Sciatic nerve (tissue), 2 donors: ENCODE measurements at regions of chr19 and their contacts with region 1.

Region 1: DNA sequence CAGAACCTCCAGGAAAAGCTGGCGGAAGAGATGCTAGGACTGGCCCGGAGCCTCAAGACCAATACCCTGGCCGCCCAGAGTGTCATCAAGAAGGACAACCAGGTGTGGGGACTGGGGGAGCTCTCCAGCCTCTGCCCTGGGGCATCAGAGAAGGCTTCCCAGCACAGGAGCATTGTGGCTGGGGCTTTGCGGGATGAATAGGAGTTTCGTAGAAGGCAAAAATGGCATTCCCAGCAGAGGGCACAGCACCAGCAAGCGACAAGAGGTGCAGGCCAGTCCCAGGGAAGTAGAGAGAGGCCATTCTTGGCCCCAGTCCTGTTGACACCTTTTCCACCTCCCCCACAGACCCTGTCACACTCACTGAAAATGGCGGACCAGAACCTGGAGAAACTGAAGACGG is 4.1 kb downstream of the USE1 start:
- DNase-seq: no peak
- ATAC-seq: no peak

Region 2: DNA sequence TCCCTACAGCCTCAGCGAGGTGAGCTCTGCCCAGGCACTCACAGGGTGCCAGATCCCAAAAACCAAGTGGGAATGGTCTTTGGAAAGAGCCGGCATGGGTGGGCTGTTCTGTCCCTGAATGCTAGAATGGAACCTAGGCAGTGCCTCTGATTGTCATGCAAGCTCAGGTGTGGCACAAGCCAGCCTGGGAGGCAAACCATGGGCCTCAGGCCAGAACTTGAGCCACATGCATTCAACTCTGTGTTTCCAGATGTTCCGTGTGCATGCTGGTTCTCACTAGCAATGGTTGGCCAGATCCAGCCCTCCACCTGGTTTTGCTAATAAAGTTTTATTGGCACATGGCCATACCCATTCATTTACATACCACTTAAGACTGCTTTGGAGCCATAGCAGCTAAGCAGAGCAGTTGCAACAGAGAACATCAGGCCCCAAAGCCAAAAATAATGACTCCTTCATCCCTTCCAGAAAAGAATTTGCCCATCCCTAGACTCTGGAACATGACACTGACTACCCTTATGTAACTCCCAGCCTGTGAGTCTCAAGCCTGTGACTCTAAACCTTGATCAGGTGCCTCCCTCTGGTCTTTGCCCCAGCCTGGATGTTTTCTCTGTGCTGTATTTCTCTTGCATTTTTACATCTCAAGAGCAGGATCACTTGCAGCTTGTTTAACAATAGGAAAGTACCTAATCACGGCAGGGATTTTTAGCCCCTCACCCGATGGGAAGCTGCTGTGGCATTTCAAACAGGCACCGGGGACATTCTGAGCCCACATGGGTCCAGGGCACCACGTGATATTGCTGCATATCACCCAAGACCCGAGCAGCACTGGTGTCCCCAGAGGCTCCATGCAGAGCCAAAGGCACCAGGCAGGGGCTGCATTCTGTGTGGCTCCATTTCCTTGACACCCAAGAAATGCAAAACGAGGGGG is 59.6 kb before region 1 on chr19:
- intact Hi-C with region 1: no loop called
- DNase-seq: no peak
- ATAC-seq: no peak

Region 3: GRCh38 chr19:17185590-17185989 is 33.7 kb before region 1 on chr19:
- intact Hi-C with region 1: loop called (anchors 1 kb)
- DNase-seq: no peak
- ATAC-seq: no peak

Region 4: DNA sequence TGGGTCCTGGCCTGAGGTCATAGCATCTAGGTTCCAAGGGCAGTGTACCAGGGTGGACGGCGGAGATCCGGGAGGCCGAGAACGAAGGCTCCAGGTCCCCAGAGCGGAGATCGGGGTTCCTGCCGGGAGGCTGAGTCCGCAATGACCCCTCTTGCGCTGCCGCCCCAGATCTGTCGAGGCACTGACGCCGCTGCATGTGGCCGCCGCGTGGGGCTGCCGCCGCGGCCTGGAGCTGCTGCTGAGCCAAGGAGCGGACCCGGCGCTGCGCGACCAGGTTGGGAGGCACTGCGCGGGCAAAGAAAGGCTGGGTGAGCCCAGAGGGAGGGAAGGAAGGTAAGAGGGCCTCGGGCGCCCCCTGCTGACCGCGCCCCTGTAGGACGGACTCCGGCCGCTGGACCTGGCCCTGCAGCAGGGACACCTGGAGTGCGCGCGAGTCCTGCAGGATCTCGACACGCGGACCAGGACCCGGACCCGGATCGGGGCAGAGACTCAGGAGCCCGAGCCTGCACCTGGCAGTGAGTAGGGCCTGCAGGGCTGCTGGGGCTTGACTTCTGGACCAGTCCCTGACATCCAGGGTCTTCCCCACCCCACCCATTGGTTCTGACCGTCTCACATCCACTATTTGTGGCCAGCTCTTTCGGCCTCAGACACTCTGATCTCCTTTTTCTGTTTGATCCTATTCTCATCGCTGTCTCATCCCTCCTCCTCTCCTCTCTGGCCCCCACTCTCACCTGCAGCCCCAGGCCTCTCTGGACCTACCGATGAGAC is 63.4 kb after region 1 on chr19:
- intact Hi-C with region 1: no loop called
- DNase-seq: peak; percentile 88
- ATAC-seq: peak; percentile 93